Lower lobe of right lung (tissue), 2 donors: ENCODE measurements at regions of chr2 and their contacts with region 1.

Region 1: DNA sequence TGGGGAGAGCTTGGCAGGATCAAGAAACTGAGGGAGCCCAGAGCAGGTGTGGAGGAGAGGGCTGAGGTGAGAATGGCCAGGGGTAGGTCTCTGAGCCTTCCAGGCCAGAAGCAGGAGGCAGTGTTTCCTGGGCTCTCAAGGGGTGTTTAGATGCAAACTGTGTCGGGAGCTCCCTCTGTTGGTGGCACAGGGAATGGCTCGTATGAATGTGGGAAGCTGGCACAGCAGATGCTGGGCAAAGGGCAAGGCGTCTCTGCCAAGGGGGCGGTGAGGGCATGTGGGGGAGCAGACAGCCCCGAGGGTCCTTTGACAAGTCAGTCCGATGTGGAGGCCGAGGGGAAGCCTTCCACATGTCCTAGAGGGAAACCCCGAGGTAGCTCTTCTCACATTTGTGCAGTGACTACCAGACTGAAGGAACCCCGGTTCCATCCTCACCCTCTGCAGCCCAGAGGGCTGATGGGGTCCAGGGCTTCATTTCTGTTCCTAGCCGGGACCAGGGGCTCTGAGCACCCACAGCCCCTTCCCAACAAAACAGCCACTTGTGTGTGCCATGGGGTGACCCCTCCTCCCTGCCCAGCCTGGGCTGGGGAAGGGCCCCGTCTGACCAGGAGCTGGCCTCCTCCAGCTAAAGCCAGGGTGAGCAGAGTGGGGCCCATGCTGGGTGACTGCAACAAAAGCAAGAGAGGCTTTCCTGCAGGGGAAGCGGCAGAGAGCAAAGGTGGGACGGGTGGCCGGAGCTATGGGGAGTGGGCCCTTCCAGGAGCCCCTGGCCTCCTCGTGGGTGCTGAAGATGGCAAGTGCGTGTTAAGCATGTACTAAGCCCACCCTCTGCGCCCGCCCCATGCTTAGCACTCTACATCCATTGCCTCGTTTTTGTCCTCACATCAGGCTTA is 103.4 kb downstream of the SEPTIN10 start:
- DNase-seq: peak; percentile 77
- ATAC-seq: peak; percentile 74 to 76
- H3K4me3 ChIP-seq: no peak overlapping the region
- H3K27ac ChIP-seq: no peak overlapping the region
- H3K4me1 ChIP-seq: peaks cover 10% of the 10 kb centered on the region
- H3K27me3 ChIP-seq: no peaks in the 10 kb centered on the region
- CTCF ChIP-seq: peak; percentile 93

Region 2: DNA sequence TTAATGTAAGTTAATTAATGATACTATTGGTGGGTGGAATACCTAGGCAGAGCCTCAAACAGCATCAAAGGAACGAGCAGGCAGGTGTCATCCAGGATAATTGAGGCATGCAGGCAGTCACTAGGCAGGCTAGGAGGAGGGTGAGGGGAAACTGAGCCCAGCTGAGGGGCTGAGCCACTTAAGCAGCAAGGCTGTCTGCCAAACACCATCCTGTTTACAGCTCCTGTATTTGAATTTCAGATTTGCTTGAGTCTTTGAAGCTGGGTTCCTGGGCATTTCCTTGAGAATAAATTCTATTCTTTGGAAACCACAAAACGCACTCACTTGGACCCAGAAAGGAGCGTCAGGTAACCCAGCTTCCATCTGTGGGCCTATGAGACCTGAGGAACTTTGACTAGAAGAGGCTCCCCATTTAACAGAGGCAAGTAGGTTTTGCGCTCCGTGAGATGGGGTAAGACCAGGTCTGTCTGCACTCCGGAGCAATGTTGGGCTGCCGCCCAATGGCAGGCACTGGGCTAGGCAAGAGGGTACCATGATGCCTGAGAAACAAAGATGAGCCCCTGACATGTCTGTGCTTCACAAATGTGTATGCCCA is 523.4 kb before region 1 on chr2:
- intact Hi-C with region 1: no loop called
- DNase-seq: no peak
- ATAC-seq: no peak
- H3K4me3 ChIP-seq: no peak overlapping the region
- H3K27ac ChIP-seq: no peak overlapping the region
- H3K4me1 ChIP-seq: no peaks in the 10 kb centered on the region
- H3K27me3 ChIP-seq: peaks cover 13% of the 10 kb centered on the region
- CTCF ChIP-seq: no peak

Region 3: GRCh38 chr2:109128048-109128465 is 382.3 kb before region 1 on chr2:
- intact Hi-C with region 1: loop called (anchors 10 kb)
- DNase-seq: peak; percentile 78
- ATAC-seq: peak; percentile 82 to 84
- H3K4me3 ChIP-seq: peak overlapping the region; percentile 74
- H3K27ac ChIP-seq: peak overlapping the region; percentile 88
- H3K4me1 ChIP-seq: peaks cover 12% of the 10 kb centered on the region
- H3K27me3 ChIP-seq: peaks cover 32% of the 10 kb centered on the region
- CTCF ChIP-seq: peak; percentile 93

Region 4: DNA sequence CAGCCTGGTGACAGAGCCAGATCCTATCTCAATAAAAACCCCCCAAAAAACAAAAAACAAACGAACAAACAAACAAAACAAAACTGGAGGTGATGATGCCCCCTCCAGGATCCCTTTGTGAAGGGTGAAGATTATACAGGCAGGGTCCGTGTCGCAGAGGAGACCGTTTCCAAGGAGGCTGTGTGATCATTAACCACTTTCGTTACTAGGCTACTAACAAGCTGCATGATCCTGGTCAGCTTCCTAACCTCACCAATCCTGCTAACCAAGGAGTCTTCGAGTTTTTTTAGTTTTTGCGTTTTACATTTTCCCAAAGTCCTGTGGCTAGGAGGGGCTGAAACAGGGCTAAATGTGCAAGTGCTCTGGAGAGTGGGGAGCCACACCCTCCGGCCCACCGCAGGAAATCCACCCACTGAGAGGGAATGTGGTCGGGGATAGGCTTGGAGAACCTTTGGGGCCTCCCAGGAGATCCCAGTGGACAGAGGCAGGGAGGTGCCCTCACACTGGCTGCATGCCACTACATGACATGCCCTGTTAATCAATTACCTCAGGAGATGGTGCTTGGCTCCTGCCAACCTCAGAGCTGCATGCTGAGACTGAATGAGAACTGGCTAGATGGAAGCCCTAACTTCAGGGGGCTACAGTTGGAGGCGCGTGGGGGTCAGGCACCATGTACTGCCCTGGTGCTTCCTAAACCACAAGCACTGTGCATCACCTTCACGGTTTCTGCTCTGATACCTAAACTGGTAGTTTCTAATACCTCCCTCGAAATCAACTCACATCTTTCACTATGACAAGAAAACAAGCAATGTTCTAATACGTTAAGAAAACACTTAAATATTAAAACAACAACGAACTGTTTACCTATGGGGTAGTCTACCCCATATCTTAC is 216.2 kb after region 1 on chr2:
- intact Hi-C with region 1: no loop called
- DNase-seq: no peak
- ATAC-seq: no peak
- H3K4me3 ChIP-seq: no peak overlapping the region
- H3K27ac ChIP-seq: no peak overlapping the region
- H3K4me1 ChIP-seq: no peaks in the 10 kb centered on the region
- H3K27me3 ChIP-seq: no peaks in the 10 kb centered on the region
- CTCF ChIP-seq: no peak